ENCODE measurements at regions of chr5 and their contacts with region 1.

Region 1: GRCh38 chr5:141960449-141961202 is 2.6 kb upstream of the PCDH12 start:
- DNase-seq: peak; percentile 93
- ATAC-seq: peak; percentile 97
- H3K4me3 ChIP-seq: peak overlapping the region in 1 of 5 experiments; percentile 2
- H3K4me3 Mint-ChIP-seq: peak overlapping the region; percentile 29
- H3K27ac ChIP-seq: peak overlapping the region in 1 of 2 donors; percentile 18
- H3K27ac Mint-ChIP-seq: peak overlapping the region; percentile 73
- H3K4me1 ChIP-seq: peaks cover 10 to 25% of the 10 kb centered on the region in 2 donors
- H3K4me1 Mint-ChIP-seq: peaks cover 17% of the 10 kb centered on the region
- H3K27me3 ChIP-seq: no peaks in the 10 kb centered on the region
- H3K27me3 Mint-ChIP-seq: no peaks in the 10 kb centered on the region
- CTCF ChIP-seq: peak; percentile 80

Region 2: GRCh38 chr5:141320225-141321169 is 640.1 kb before region 1 on chr5 and contains the start of gene TAF7:
- CTCF ChIA-PET with region 1: no interaction called
- POLR2A ChIA-PET with region 1: no interaction called
- intact Hi-C with region 1: loop called (anchors 2 kb)
- DNase-seq: peak; percentile 96
- ATAC-seq: peak; percentile 90
- H3K4me3 ChIP-seq: peak within 1 kb of the TSS; percentile 78 to 100 (median 97)
- H3K4me3 Mint-ChIP-seq: peak within 1 kb of the TSS; percentile 96
- H3K27ac ChIP-seq: peak within 1 kb of the TSS; percentile 95 to 96
- H3K27ac Mint-ChIP-seq: peak within 1 kb of the TSS; percentile 98
- H3K4me1 ChIP-seq: peaks cover 17 to 20% of the 10 kb centered on the region in 2 donors
- H3K4me1 Mint-ChIP-seq: peaks cover 28% of the 10 kb centered on the region
- H3K27me3 ChIP-seq: no peaks in the 10 kb centered on the region
- H3K27me3 Mint-ChIP-seq: no peaks in the 10 kb centered on the region
- CTCF ChIP-seq: peak; percentile 89
- total RNA-seq, gene TAF7: 119 TPM in 2 replicates

Region 3: DNA sequence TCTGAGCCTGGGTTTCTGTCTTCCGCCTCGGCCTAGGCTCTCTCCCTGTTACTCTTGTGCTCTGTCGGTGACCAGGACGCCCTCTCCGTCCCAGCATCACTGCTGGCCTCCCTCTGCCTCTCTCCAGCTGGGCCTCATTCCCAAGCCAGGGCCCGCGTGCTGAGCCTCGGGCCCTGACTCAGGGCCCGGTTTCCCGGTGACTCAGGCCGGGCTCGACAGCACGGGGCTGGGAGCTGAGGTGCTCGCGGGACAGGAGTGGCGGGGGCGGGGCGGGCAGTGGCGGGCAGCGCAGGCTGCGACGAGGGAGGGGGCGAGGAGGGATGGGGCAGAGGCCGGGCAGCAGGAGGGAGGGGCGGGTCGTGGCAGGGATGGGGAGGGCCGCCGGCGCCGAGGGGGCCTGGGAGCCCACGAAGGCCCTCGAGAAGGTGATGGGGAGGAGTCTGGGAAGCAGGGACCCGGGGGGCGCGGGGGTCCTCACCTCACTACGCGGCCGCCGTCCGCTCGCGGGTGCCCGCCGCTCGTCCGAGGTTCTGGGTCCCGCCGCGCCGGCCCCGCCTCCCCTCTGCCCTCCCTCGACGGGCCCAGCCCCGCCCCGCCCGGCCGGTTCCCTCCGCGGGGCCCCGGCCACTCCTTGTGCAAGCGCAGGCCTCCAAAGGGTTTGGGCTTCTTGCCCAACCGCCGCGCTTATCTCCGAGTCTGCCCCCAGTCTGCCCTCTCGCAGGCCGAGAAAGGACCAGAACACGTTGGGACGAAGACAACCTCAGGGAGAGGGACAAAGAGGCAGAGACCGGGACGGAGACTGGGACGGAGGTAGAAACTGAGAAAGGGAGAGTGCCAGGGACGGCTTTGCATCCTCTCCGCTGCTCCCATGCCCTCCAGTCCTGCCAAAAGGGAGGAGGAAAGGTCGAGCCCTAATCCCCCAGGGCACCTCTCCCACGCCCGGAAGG is 278.7 kb before region 1 on chr5 and contains the start of gene ARAP3:
- CTCF ChIA-PET with region 1: interaction called, 15 read pairs
- POLR2A ChIA-PET with region 1: no interaction called
- intact Hi-C with region 1: no loop called
- DNase-seq: peak; percentile 54
- ATAC-seq: peak; percentile 74
- H3K4me3 ChIP-seq: peak within 1 kb of the TSS; percentile 41 to 76 (median 58)
- H3K4me3 Mint-ChIP-seq: peak within 1 kb of the TSS; percentile 89
- H3K27ac ChIP-seq: no peak within 1 kb of the TSS
- H3K27ac Mint-ChIP-seq: peak within 1 kb of the TSS; percentile 78
- H3K4me1 ChIP-seq: peaks cover 20 to 23% of the 10 kb centered on the region in 2 donors
- H3K4me1 Mint-ChIP-seq: peaks cover 20% of the 10 kb centered on the region
- H3K27me3 ChIP-seq: peaks cover 0 to 19% (median 0%) of the 10 kb centered on the region in 4 experiments
- H3K27me3 Mint-ChIP-seq: peaks cover 5% of the 10 kb centered on the region
- CTCF ChIP-seq: no peak
- total RNA-seq, gene ARAP3: 3.0 and 3.7 TPM in 2 replicates

Region 4: GRCh38 chr5:141878711-141879425 is 81.8 kb before region 1 on chr5:
- CTCF ChIA-PET with region 1: interaction called, 68 read pairs
- POLR2A ChIA-PET with region 1: interaction called, 4 read pairs
- intact Hi-C with region 1: loop called (anchors 2 kb)
- DNase-seq: peak; percentile 94
- ATAC-seq: peak; percentile 84
- H3K4me3 ChIP-seq: peak overlapping the region in 4 of 5 experiments; percentile 34 to 65 (median 54)
- H3K4me3 Mint-ChIP-seq: peak overlapping the region; percentile 89
- H3K27ac ChIP-seq: no peak overlapping the region
- H3K27ac Mint-ChIP-seq: peak overlapping the region; percentile 46
- H3K4me1 ChIP-seq: peaks cover 39 to 43% of the 10 kb centered on the region in 2 donors
- H3K4me1 Mint-ChIP-seq: peaks cover 31% of the 10 kb centered on the region
- H3K27me3 ChIP-seq: peaks cover 0 to 88% (median 54%) of the 10 kb centered on the region in 4 experiments
- H3K27me3 Mint-ChIP-seq: peaks cover 72% of the 10 kb centered on the region
- CTCF ChIP-seq: peak; percentile 96

Region 5: GRCh38 chr5:141923448-141924352 is 36.9 kb before region 1 on chr5 and contains the start of gene DELE1:
- CTCF ChIA-PET with region 1: interaction called, 26 read pairs
- POLR2A ChIA-PET with region 1: interaction called, 5 read pairs
- intact Hi-C with region 1: no loop called
- DNase-seq: peak; percentile 94
- ATAC-seq: peak; percentile 94
- H3K4me3 ChIP-seq: peak within 1 kb of the TSS; percentile 63 to 92 (median 85)
- H3K4me3 Mint-ChIP-seq: peak within 1 kb of the TSS; percentile 92
- H3K27ac ChIP-seq: peak within 1 kb of the TSS; percentile 95 to 98
- H3K27ac Mint-ChIP-seq: peak within 1 kb of the TSS; percentile 96
- H3K4me1 ChIP-seq: peaks cover 12 to 18% of the 10 kb centered on the region in 2 donors
- H3K4me1 Mint-ChIP-seq: peaks cover 20% of the 10 kb centered on the region
- H3K27me3 ChIP-seq: no peaks in the 10 kb centered on the region
- H3K27me3 Mint-ChIP-seq: no peaks in the 10 kb centered on the region
- CTCF ChIP-seq: no peak
- total RNA-seq, gene DELE1: 124 and 134 TPM in 2 replicates

Region 6: GRCh38 chr5:142012792-142013388 is 52.3 kb after region 1 on chr5 and contains the start of gene GNPDA1:
- CTCF ChIA-PET with region 1: interaction called, 17 read pairs
- POLR2A ChIA-PET with region 1: no interaction called
- intact Hi-C with region 1: no loop called
- DNase-seq: peak; percentile 83
- ATAC-seq: peak; percentile 88
- H3K4me3 ChIP-seq: peak within 1 kb of the TSS; percentile 44 to 74 (median 67)
- H3K4me3 Mint-ChIP-seq: peak within 1 kb of the TSS; percentile 89
- H3K27ac ChIP-seq: peak within 1 kb of the TSS; percentile 45 to 59
- H3K27ac Mint-ChIP-seq: peak within 1 kb of the TSS; percentile 78
- H3K4me1 ChIP-seq: peaks cover 27 to 30% of the 10 kb centered on the region in 2 donors
- H3K4me1 Mint-ChIP-seq: peaks cover 43% of the 10 kb centered on the region
- H3K27me3 ChIP-seq: no peaks in the 10 kb centered on the region
- H3K27me3 Mint-ChIP-seq: peaks cover 3% of the 10 kb centered on the region
- CTCF ChIP-seq: no peak
- total RNA-seq, gene GNPDA1: 12.1 and 15.0 TPM in 2 replicates

Region 7: GRCh38 chr5:142627383-142628255 is 667.0 kb after region 1 on chr5:
- CTCF ChIA-PET with region 1: no interaction called
- POLR2A ChIA-PET with region 1: no interaction called
- intact Hi-C with region 1: no loop called
- DNase-seq: no peak
- ATAC-seq: no peak
- H3K4me3 ChIP-seq: no peak overlapping the region
- H3K4me3 Mint-ChIP-seq: no peak overlapping the region
- H3K27ac ChIP-seq: no peak overlapping the region
- H3K27ac Mint-ChIP-seq: no peak overlapping the region
- H3K4me1 ChIP-seq: no peaks in the 10 kb centered on the region
- H3K4me1 Mint-ChIP-seq: no peaks in the 10 kb centered on the region
- H3K27me3 ChIP-seq: no peaks in the 10 kb centered on the region
- H3K27me3 Mint-ChIP-seq: peaks cover 20% of the 10 kb centered on the region
- CTCF ChIP-seq: no peak

Measured in B cell (primary cell).